ENCODE measurements at regions of chr11 and their contacts with region 1.

Region 1: GRCh38 chr11:47523468-47524225 is 29.3 kb downstream of the CELF1 start:
- DNase-seq: peak in 2 of 5 donors; percentile 43 to 59
- ATAC-seq: peak; percentile 81 to 89 (median 85)
- H3K4me3 ChIP-seq: peak overlapping the region in 9 of 12 donors; percentile 4 to 48 (median 39)
- H3K27ac ChIP-seq: peak overlapping the region; percentile 38 to 91 (median 72)
- H3K4me1 ChIP-seq: peaks cover 5 to 88% (median 59%) of the 10 kb centered on the region in 12 donors
- H3K27me3 ChIP-seq: no peaks in the 10 kb centered on the region
- CTCF ChIP-seq: no peak
- POLR2A ChIP-seq: no peak

Region 2: DNA sequence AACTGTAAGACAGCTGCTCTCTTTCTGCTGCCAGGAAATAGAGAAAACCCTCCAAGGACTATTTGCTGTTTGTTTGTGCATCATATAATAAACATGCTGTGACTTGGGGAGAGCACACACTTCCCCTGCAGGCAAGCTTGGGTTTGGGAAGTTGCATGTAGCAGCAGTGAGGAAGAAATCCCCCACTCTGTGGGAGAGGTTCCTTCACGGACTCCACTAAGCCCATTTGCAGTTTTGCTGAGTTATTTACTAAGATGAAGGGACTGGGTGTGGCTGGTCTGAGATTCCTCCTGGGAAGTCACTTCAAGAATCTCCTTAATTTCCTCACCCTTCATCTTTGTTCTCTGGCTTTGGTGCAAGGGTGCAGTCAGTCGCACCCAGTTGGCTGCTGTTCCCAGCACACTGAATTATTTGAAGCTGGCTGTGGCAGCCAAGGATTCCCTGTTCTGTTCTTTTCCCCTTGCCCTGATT is 451.8 kb before region 1 on chr11:
- intact Hi-C with region 1: no loop called
- DNase-seq: peak in 1 of 5 donors; percentile 47
- ATAC-seq: peak; percentile 33 to 69 (median 57)
- H3K4me3 ChIP-seq: no peak overlapping the region
- H3K27ac ChIP-seq: peak overlapping the region in 1 of 12 donors; percentile 11
- H3K4me1 ChIP-seq: peaks cover 0 to 13% (median 7%) of the 10 kb centered on the region in 12 donors
- H3K27me3 ChIP-seq: no peaks in the 10 kb centered on the region
- CTCF ChIP-seq: no peak
- POLR2A ChIP-seq: no peak

Region 3: DNA sequence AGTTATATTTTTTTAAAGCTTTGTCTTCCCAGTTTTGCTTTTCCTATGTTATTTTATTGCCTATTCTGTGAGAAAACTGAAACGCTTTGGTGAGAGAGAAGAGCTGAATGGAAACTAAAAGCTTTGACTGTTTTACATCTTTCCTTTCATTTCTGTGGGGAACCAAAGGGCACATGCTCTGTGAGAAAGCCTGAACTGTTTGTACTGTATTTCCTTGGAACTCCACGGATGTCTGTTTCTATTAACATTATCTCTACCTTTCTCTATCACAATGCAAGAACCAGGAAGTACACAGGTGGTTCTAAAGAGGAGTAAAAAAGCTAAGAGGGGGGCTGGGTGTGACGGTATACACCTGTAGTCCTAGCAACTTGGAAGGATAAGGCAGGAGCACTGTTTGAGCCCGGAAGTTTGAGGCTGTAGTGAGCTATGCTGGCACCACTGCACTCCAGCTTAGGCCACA is 14.5 kb before region 1 on chr11:
- intact Hi-C with region 1: loop called in 1 of 10 experiments (anchors 1 kb)
- DNase-seq: no peak
- ATAC-seq: peak in 1 of 4 donors; percentile 16
- H3K4me3 ChIP-seq: no peak overlapping the region
- H3K27ac ChIP-seq: peak overlapping the region in 3 of 12 donors; percentile 25 to 73 (median 29)
- H3K4me1 ChIP-seq: peaks cover 0 to 88% (median 62%) of the 10 kb centered on the region in 12 donors
- H3K27me3 ChIP-seq: no peaks in the 10 kb centered on the region
- CTCF ChIP-seq: no peak
- POLR2A ChIP-seq: no peak

Region 4: GRCh38 chr11:47539681-47540038 is 16.0 kb after region 1 on chr11:
- intact Hi-C with region 1: no loop called
- DNase-seq: no peak
- ATAC-seq: peak in 1 of 4 donors; percentile 9
- H3K4me3 ChIP-seq: no peak overlapping the region
- H3K27ac ChIP-seq: peak overlapping the region in 3 of 12 donors; percentile 11 to 42 (median 14)
- H3K4me1 ChIP-seq: peaks cover 6 to 83% (median 57%) of the 10 kb centered on the region in 12 donors
- H3K27me3 ChIP-seq: no peaks in the 10 kb centered on the region
- CTCF ChIP-seq: no peak
- POLR2A ChIP-seq: no peak

Measured in heart left ventricle (tissue), 16 donors.